ENCODE measurements at regions of chr19 and their contacts with region 1.

Region 1: GRCh38 chr19:13033819-13034611 is 38.7 kb downstream of the NFIX start:
- DNase-seq: peak; percentile 51 to 64
- ATAC-seq: peak; percentile 76 to 96 (median 94)
- H3K4me3 ChIP-seq: no peak overlapping the region
- H3K4me3 Mint-ChIP-seq: no peak overlapping the region
- H3K27ac ChIP-seq: no peak overlapping the region
- H3K27ac Mint-ChIP-seq: no peak overlapping the region
- H3K4me1 ChIP-seq: no peaks in the 10 kb centered on the region
- H3K4me1 Mint-ChIP-seq: peaks cover 7 to 11% of the 10 kb centered on the region in 2 donors
- H3K27me3 ChIP-seq: no peaks in the 10 kb centered on the region
- H3K27me3 Mint-ChIP-seq: peaks cover 4 to 6% of the 10 kb centered on the region in 2 donors
- CTCF ChIP-seq: peak; percentile 66

Region 2: GRCh38 chr19:13060964-13061927 is 27.2 kb after region 1 on chr19:
- intact Hi-C with region 1: loop called (anchors 1 kb)
- DNase-seq: peak; percentile 79 to 89
- ATAC-seq: peak; percentile 85 to 99 (median 98)
- H3K4me3 ChIP-seq: peak overlapping the region; percentile 27
- H3K4me3 Mint-ChIP-seq: peak overlapping the region; percentile 85
- H3K27ac ChIP-seq: no peak overlapping the region
- H3K27ac Mint-ChIP-seq: peak overlapping the region in 1 of 2 donors; percentile 81
- H3K4me1 ChIP-seq: peaks cover 19% of the 10 kb centered on the region
- H3K4me1 Mint-ChIP-seq: peaks cover 6 to 11% of the 10 kb centered on the region in 2 donors
- H3K27me3 ChIP-seq: peaks cover 7% of the 10 kb centered on the region
- H3K27me3 Mint-ChIP-seq: peaks cover 14 to 25% of the 10 kb centered on the region in 2 donors
- CTCF ChIP-seq: peak; percentile 99

Measured in natural killer cell (primary cell).